ENCODE measurements at regions of chr1 and their contacts with region 1.

Region 1: DNA sequence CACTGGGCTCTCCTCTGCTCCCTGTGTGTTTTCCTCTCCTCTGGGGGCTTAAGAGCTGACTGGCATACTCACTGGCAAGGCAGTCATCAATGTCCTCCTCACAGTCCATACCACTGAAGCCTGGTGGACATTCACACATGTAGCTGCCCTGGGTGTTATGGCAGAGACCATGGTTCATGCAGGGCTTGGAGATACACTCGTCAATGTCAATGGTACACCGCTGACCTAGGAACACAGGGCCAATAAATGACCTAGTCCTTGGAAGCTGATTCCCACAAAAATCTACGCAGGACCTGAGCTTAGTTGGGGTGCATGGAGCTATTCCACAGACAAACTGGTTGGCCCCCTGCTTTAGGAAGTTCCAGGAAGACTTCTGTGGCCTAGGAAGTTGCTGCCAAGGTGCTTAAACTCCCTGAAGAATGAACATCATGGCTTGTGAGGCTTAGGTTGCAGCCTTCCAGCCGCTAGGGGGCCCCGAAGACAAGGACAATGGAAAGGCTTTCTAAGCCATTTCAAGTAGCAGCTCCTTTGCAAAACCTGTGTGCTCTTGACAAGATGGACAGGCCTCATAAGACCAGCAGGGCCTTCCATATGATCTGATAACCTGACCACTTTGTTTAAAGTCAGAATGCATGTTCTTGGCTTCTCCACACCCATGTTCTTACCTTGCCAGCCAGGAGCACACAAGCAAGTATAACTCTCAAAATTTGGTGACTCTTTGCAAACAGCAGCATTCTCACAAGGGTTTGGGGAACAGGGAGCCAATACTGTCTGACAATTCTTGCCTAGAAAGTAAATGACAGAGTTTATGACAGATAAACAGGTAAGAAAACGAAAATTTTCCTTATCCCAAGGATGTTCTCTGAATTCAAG is 52.3 kb upstream of the ADAM30 start:
- DNase-seq: no peak
- H3K4me3 ChIP-seq: no peak overlapping the region
- H3K27me3 ChIP-seq: no peaks in the 10 kb centered on the region
- CTCF ChIP-seq: peak; percentile 93

Region 2: DNA sequence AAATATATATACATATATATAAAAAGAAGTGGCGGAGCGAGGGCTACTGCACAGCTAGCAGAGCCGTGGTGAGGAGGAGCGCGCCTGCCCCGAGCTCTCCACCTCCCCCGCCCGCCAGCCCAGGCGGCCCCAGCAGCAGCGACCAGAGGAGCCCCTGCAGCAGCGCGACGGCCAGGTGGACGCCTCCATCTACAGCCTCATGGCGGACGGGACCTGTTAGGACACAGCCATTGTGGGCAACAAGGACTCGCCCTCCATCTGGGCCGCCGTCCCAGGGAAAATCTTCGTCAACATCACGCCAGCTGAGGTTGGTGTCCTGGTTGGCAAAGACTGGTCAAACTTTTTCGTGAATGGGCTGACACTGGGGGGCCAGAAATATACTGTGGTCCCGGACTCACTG is 95.4 kb before region 1 on chr1:
- CTCF ChIA-PET with region 1: no interaction called
- POLR2A ChIA-PET with region 1: no interaction called
- DNase-seq: no peak
- H3K4me3 ChIP-seq: no peak overlapping the region
- H3K27me3 ChIP-seq: no peaks in the 10 kb centered on the region
- CTCF ChIP-seq: no peak

Region 3: GRCh38 chr1:119935373-119935772 is 13.2 kb before region 1 on chr1:
- CTCF ChIA-PET with region 1: interaction called, 13 read pairs
- POLR2A ChIA-PET with region 1: no interaction called
- DNase-seq: no peak
- H3K4me3 ChIP-seq: no peak overlapping the region
- H3K27me3 ChIP-seq: no peaks in the 10 kb centered on the region
- CTCF ChIP-seq: no peak

Region 4: DNA sequence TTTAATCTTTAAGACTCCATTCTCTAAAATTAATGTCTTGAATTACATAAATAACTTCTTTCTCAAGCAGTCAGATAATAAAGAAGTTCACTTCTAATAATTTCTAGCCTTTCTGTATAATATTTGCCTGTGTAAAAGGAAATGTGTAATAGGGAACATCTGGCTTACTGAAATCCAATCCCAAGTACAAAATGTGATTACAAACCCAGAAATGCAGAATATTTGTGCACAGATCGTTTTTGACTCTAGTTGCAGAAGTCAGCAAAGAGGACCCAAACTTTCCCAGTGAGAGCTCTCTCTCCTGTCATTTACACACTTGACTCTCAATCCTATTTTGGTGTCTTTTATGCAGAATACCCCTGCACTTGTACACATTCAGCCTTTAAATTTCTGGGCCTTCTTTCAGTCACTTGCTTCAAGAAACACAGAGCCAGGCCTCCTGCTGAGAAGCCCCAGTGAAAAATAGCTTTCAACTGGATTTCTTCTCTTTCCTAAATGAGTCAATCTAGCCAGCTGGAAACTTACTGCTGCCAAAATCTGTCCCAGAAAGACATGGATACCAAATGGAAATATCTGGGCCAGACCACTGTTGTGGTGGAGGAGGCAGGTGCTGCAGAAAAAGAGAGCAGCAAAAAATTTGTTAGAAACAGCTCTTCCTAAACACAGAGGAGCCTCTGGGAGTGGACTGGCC is 16.2 kb after region 1 on chr1:
- CTCF ChIA-PET with region 1: interaction called, 27 read pairs
- POLR2A ChIA-PET with region 1: no interaction called
- DNase-seq: peak; percentile 31
- H3K4me3 ChIP-seq: no peak overlapping the region
- H3K27me3 ChIP-seq: no peaks in the 10 kb centered on the region
- CTCF ChIP-seq: no peak

Measured in BJ (cell line).